ENCODE measurements at regions of chr12 and their contacts with region 1.

Region 1: GRCh38 chr12:122123051-122123760 is 44.6 kb downstream of the MLXIP start:
- DNase-seq: peak in 1 of 2 experiments; percentile 92
- H3K4me3 ChIP-seq: no peak overlapping the region
- H3K27ac ChIP-seq: no peak overlapping the region
- H3K4me1 ChIP-seq: peaks cover 0 to 6% (median 3%) of the 10 kb centered on the region in 4 experiments; a peak in 4 of 7 replicates
- H3K27me3 ChIP-seq: no peaks in the 10 kb centered on the region
- CTCF ChIP-seq: peak; percentile 42 to 73 (median 68)
- EP300 ChIP-seq: no peak
- POLR2A ChIP-seq: no peak
- RAD21 ChIP-seq: peak; percentile 76 to 87

Region 2: GRCh38 chr12:122078141-122079032 is 44.8 kb before region 1 on chr12 and contains the start of gene MLXIP:
- CTCF ChIA-PET with region 1: interaction called, 26 read pairs
- POLR2A ChIA-PET with region 1: interaction called, 3 read pairs
- DNase-seq: peak; percentile 43 to 95
- H3K4me3 ChIP-seq: peak within 1 kb of the TSS; percentile 62 to 74 (median 68)
- H3K27ac ChIP-seq: no peak within 1 kb of the TSS; the same call in 1 of the 2 replicates
- H3K4me1 ChIP-seq: peaks cover 4 to 8% (median 5%) of the 10 kb centered on the region in 4 experiments; a peak in 5 of 7 replicates
- H3K27me3 ChIP-seq: peaks cover 4 to 21% (median 19%) of the 10 kb centered on the region in 4 experiments; a peak in 6 of 7 replicates
- CTCF ChIP-seq: no peak
- EP300 ChIP-seq: no peak
- POLR2A ChIP-seq: peak in 1 of 2 experiments; percentile 68; a peak in 2 of 3 replicates
- RAD21 ChIP-seq: no peak
- total RNA-seq, gene MLXIP: 40.4 and 40.5 TPM in 2 replicates

Region 3: GRCh38 chr12:122097927-122098756 is 25.1 kb before region 1 on chr12:
- CTCF ChIA-PET with region 1: interaction called, 40 read pairs
- POLR2A ChIA-PET with region 1: no interaction called
- DNase-seq: no peak
- H3K4me3 ChIP-seq: no peak overlapping the region
- H3K27ac ChIP-seq: no peak overlapping the region
- H3K4me1 ChIP-seq: peaks cover 0 to 6% (median 0%) of the 10 kb centered on the region in 4 experiments; a peak in 3 of 7 replicates
- H3K27me3 ChIP-seq: no peaks in the 10 kb centered on the region; a peak in 1 of 7 replicates
- CTCF ChIP-seq: no peak
- EP300 ChIP-seq: no peak
- POLR2A ChIP-seq: no peak
- RAD21 ChIP-seq: no peak

Region 4: DNA sequence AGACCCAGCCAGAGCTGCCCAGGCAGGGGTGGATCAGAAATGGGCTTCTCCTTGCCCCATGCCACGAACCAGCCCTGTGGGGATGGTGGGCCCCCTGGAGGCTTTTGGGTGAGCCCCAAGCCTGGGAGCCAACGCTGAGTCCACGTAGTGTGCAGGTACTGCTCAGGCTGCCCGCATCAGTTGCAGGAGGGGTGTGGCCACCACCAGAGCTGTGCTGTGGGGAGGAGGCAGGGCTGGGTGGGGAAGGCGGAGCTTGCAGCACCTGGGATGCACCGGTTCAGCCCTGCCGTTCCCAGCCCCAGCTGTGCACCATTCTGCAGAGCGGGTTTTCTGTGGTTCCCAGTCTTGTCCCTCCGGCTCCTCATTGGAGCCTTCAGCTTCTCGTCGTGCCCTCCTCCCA is 14.5 kb after region 1 on chr12:
- CTCF ChIA-PET with region 1: interaction called, 29 read pairs
- POLR2A ChIA-PET with region 1: no interaction called
- DNase-seq: peak in 1 of 2 experiments; percentile 82
- H3K4me3 ChIP-seq: peak overlapping the region in 3 of 4 experiments; percentile 4 to 37 (median 10); a peak in 2 of 8 replicates
- H3K27ac ChIP-seq: 0 out of 2 replicates have a peak overlapping the region, but pooled peaks have one; percentile 29
- H3K4me1 ChIP-seq: peaks cover 0 to 8% (median 3%) of the 10 kb centered on the region in 4 experiments; a peak in 5 of 7 replicates
- H3K27me3 ChIP-seq: no peaks in the 10 kb centered on the region; a peak in 1 of 7 replicates
- CTCF ChIP-seq: no peak
- EP300 ChIP-seq: no peak
- POLR2A ChIP-seq: no peak
- RAD21 ChIP-seq: no peak

Region 5: GRCh38 chr12:122437656-122438121 is 314.5 kb after region 1 on chr12:
- CTCF ChIA-PET with region 1: no interaction called
- POLR2A ChIA-PET with region 1: no interaction called
- DNase-seq: no peak
- H3K4me3 ChIP-seq: no peak overlapping the region
- H3K27ac ChIP-seq: no peak overlapping the region
- H3K4me1 ChIP-seq: no peaks in the 10 kb centered on the region
- H3K27me3 ChIP-seq: no peaks in the 10 kb centered on the region
- CTCF ChIP-seq: no peak
- EP300 ChIP-seq: no peak
- POLR2A ChIP-seq: no peak
- RAD21 ChIP-seq: no peak

Measured in H1 (cell line).